HepG2 (cell line): ENCODE measurements at regions of chr19 and their contacts with region 1.

Region 1: GRCh38 chr19:49546825-49547565 is 19.2 kb downstream of the RCN3 start:
- DNase-seq: peak; percentile 85
- ATAC-seq: peak; percentile 77
- H3K4me3 ChIP-seq: no peak overlapping the region
- H3K27ac ChIP-seq: peak overlapping the region; percentile 44
- H3K4me1 ChIP-seq: peaks cover 5% of the 10 kb centered on the region
- H3K27me3 ChIP-seq: no peaks in the 10 kb centered on the region
- CTCF ChIP-seq: peak; percentile 90
- EP300 ChIP-seq: no peak
- POLR2A ChIP-seq: no peak
- RAD21 ChIP-seq: peak; percentile 79

Region 2: GRCh38 chr19:49502866-49503581 is 44.0 kb before region 1 on chr19:
- CTCF ChIA-PET with region 1: interaction called, 31 read pairs
- POLR2A ChIA-PET with region 1: interaction called, 9 read pairs
- in situ Hi-C with region 1: loop called (anchors 5 kb)
- intact Hi-C with region 1: loop called (anchors 1 kb)
- DNase-seq: peak; percentile 74
- ATAC-seq: peak; percentile 62
- H3K4me3 ChIP-seq: peak overlapping the region in 1 of 3 experiments; percentile 46; a peak in 1 of 6 replicates
- H3K27ac ChIP-seq: no peak overlapping the region
- H3K4me1 ChIP-seq: peaks cover 57% of the 10 kb centered on the region
- H3K27me3 ChIP-seq: no peaks in the 10 kb centered on the region
- CTCF ChIP-seq: peak; percentile 81
- EP300 ChIP-seq: no peak
- POLR2A ChIP-seq: no peak
- RAD21 ChIP-seq: peak; percentile 68

Region 3: DNA sequence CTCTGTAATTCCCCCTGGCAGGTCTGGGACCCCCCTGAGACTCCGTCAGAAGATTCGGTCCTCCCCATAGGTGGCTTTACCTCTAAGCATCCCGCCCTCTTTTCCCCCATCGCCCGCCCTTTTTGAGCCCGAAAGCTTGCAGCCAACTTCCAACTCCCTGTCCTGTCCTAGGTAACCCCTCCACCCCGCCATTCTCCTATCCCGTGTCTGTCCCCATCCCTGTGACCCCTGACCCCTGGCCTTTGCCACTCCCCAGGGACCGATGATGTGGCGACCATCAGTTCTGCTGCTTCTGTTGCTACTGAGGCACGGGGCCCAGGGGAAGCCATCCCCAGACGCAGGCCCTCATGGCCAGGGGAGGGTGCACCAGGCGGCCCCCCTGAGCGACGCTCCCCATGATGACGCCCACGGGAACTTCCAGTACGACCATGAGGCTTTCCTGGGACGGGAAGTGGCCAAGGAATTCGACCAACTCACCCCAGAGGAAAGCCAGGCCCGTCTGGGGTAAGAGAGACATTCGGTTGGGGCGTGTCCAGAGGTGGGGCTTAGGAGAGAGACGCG is 18.7 kb before region 1 on chr19:
- CTCF ChIA-PET with region 1: no interaction called
- POLR2A ChIA-PET with region 1: no interaction called
- in situ Hi-C with region 1: no loop called
- intact Hi-C with region 1: no loop called
- DNase-seq: no peak
- ATAC-seq: no peak
- H3K4me3 ChIP-seq: no peak overlapping the region
- H3K27ac ChIP-seq: no peak overlapping the region
- H3K4me1 ChIP-seq: no peaks in the 10 kb centered on the region
- H3K27me3 ChIP-seq: no peaks in the 10 kb centered on the region
- CTCF ChIP-seq: no peak
- EP300 ChIP-seq: no peak
- POLR2A ChIP-seq: no peak
- RAD21 ChIP-seq: no peak

Region 4: DNA sequence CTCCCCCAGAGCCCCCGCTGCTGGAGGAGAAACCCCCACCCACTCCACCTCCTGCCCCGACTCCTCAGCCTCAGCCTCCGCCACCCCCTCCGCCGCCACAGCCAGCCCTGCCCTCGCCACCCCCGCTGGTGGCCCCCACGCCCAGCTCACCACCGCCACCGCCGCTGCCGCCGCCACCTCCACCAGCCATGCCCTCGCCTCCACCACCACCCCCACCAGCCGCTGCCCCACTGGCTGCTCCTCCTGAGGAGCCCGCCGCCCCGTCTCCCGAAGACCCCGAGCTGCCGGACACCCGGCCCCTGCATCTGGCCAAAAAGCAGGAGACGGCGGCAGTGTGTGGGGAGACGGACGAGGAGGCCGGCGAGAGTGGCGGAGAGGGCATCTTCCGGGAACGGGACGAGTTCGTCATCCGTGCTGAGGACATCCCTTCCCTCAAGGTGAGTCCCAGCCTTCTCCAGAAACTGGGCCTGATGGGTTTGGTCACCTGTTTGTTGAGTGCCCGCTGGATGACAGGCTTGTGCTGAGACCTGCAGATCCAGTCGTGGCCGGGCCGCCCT is 54.6 kb after region 1 on chr19:
- CTCF ChIA-PET with region 1: no interaction called
- POLR2A ChIA-PET with region 1: no interaction called
- in situ Hi-C with region 1: no loop called
- intact Hi-C with region 1: no loop called
- DNase-seq: no peak
- ATAC-seq: no peak
- H3K4me3 ChIP-seq: no peak overlapping the region
- H3K27ac ChIP-seq: no peak overlapping the region
- H3K4me1 ChIP-seq: 0 out of 2 replicates have a peak, but pooled peaks cover 4% of the 10 kb centered on the region
- H3K27me3 ChIP-seq: no peaks in the 10 kb centered on the region
- CTCF ChIP-seq: no peak
- EP300 ChIP-seq: no peak
- POLR2A ChIP-seq: 0 out of 4 replicates have a peak, but pooled peaks of 1 of the 2 experiments have one; percentile 12
- RAD21 ChIP-seq: no peak